CD4-positive, alpha-beta memory T cell (primary cell): ENCODE measurements at regions of chr17 and their contacts with region 1.

Region 1: GRCh38 chr17:44947461-44948314 is at the start of gene KIF18B:
- DNase-seq: peak; percentile 86 to 90 (median 88)
- H3K4me3 ChIP-seq: peak within 1 kb of the TSS; percentile 74 to 80
- H3K4me3 Mint-ChIP-seq: peak within 1 kb of the TSS; percentile 90 to 98 (median 97)
- H3K27ac ChIP-seq: peak within 1 kb of the TSS; percentile 55
- H3K27ac Mint-ChIP-seq: peak within 1 kb of the TSS; percentile 77 to 98 (median 97)
- H3K4me1 ChIP-seq: peaks cover 19% of the 10 kb centered on the region
- H3K4me1 Mint-ChIP-seq: peaks cover 3 to 23% (median 14%) of the 10 kb centered on the region in 4 donors
- H3K27me3 ChIP-seq: no peaks in the 10 kb centered on the region
- H3K27me3 Mint-ChIP-seq: no peaks in the 10 kb centered on the region
- total RNA-seq, gene KIF18B: not detected

Region 2: DNA sequence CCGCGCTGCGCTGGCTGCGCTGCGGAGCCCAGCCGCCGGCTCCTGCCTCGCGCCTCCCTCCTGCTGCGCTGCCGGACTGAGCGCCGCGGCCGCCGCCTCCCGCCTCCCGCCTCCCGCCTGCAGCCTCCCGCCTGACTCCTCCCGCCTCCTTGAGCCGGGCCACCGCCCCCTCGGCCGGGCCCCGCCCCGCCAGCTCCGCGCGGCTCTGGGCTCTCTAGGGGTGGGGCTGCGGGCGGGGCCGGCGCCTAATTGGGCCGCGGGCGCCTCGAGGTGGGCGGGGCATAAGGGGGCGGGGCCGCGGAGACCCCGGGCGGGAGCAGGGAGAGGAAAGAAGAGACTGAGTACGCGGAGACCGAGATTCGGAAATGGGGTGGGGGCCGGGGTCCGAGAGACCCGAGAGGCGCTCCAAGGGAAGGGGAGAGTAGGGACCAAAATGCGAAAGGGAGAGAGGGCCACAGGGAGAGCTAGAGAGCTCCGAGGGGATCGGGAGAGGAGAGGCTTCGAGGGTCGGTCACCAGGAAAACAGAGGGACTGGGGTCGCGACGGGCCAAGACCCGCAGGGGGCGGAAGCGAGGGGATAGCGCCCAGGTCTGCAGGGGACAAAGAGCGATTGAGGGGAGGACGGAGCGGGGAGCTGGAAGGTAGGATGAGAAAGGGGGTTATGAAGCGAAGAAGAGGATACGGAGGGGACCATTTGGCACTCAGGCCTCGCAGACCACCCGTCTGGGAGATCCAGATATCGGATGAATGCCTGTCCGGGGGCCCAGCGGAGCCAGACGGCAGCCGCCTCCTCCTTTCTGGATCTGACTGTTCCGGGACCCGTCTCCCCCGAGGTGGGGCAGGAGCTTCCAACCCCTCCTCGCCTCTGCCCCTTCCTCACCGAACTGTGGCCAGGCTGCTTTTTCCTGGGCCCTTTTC is 20.8 kb after region 1 on chr17 and contains the start of gene C1QL1:
- CTCF ChIA-PET with region 1: no interaction called
- POLR2A ChIA-PET with region 1: no interaction called
- intact Hi-C with region 1: loop called (anchors 1 kb)
- DNase-seq: peak; percentile 71 to 79 (median 73)
- H3K4me3 ChIP-seq: peak within 1 kb of the TSS; percentile 47 to 55
- H3K4me3 Mint-ChIP-seq: peak within 1 kb of the TSS; percentile 64 to 90 (median 76)
- H3K27ac ChIP-seq: no peak within 1 kb of the TSS
- H3K27ac Mint-ChIP-seq: peak within 1 kb of the TSS in 3 of 7 donors; percentile 35 to 54 (median 38)
- H3K4me1 ChIP-seq: peaks cover 28% of the 10 kb centered on the region
- H3K4me1 Mint-ChIP-seq: peaks cover 12 to 42% (median 24%) of the 10 kb centered on the region in 4 donors
- H3K27me3 ChIP-seq: peaks cover 37% of the 10 kb centered on the region
- H3K27me3 Mint-ChIP-seq: peaks cover 22 to 48% of the 10 kb centered on the region in 2 donors
- total RNA-seq, gene C1QL1: not detected

Region 3: GRCh38 chr17:45003877-45004276 is 56.2 kb after region 1 on chr17:
- CTCF ChIA-PET with region 1: no interaction called
- POLR2A ChIA-PET with region 1: no interaction called
- intact Hi-C with region 1: no loop called
- DNase-seq: no peak
- H3K4me3 ChIP-seq: no peak overlapping the region
- H3K4me3 Mint-ChIP-seq: no peak overlapping the region
- H3K27ac ChIP-seq: no peak overlapping the region
- H3K27ac Mint-ChIP-seq: no peak overlapping the region
- H3K4me1 ChIP-seq: no peaks in the 10 kb centered on the region
- H3K4me1 Mint-ChIP-seq: no peaks in the 10 kb centered on the region
- H3K27me3 ChIP-seq: no peaks in the 10 kb centered on the region
- H3K27me3 Mint-ChIP-seq: peaks cover 16 to 17% of the 10 kb centered on the region in 2 donors

Region 4: GRCh38 chr17:45021607-45022287 is 74.1 kb after region 1 on chr17:
- CTCF ChIA-PET with region 1: no interaction called
- POLR2A ChIA-PET with region 1: no interaction called
- intact Hi-C with region 1: loop called (anchors 10 kb)
- DNase-seq: peak; percentile 50 to 66 (median 55)
- H3K4me3 ChIP-seq: peak overlapping the region in 1 of 2 donors; percentile 47
- H3K4me3 Mint-ChIP-seq: peak overlapping the region in 7 of 8 donors; percentile 35 to 84 (median 69)
- H3K27ac ChIP-seq: no peak overlapping the region
- H3K27ac Mint-ChIP-seq: peak overlapping the region in 3 of 7 donors; percentile 7 to 39 (median 24)
- H3K4me1 ChIP-seq: peaks cover 25% of the 10 kb centered on the region
- H3K4me1 Mint-ChIP-seq: peaks cover 11 to 22% (median 18%) of the 10 kb centered on the region in 4 donors
- H3K27me3 ChIP-seq: peaks cover 20% of the 10 kb centered on the region
- H3K27me3 Mint-ChIP-seq: peaks cover 26 to 31% of the 10 kb centered on the region in 2 donors